ENCODE measurements at regions of chr6 and their contacts with region 1.

Region 1: DNA sequence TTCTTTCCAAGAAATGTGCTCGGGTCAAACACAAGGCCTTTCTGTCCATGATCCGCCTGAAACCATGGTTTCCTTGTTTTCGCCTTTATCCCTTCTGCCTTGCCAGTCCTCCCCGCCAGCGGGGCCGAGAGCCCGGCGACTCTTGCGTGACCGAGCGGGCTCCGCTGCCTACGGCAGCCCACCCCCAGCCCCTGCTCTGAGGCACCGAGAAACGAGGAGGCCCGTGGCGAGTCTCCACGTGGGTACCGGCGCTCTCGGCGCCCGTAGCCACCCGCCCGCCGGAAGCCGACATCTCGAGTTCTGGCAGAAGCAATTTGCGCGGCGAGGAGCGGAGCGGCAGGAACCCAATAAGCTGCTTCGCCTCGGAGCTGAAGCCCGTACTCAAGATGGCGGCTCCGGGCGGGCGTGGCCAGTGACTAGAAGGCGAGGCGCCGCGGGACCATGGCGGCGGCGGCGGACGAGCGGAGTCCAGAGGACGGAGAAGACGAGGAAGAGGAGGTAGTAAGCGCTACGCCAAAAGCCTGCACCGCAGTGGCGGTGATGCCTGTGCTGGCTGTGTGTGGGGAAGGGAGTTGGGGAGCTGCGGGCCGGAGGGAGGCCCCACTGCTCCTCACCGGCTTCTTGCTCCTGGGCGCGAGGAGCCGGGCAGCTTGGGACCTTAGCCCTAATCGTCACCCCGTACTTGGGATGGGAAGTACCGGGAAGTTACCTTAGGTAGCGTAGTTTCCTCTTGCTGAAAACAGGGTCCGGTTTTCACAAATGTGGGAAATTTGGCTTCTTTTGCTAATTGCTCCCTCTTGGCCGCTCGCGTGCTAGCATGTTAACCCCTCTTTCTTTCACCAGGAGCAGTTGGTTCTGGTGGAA is at the start of gene GTF3C6:
- DNase-seq: peak; percentile 94
- H3K4me3 Mint-ChIP-seq: peak within 1 kb of the TSS; percentile 94
- H3K27ac Mint-ChIP-seq: peak within 1 kb of the TSS; percentile 96
- H3K4me1 Mint-ChIP-seq: peaks cover 14% of the 10 kb centered on the region
- H3K27me3 Mint-ChIP-seq: no peaks in the 10 kb centered on the region
- total RNA-seq, gene GTF3C6: 81.6 to 84.7 TPM

Region 2: GRCh38 chr6:110981202-110981600 is 22.6 kb after region 1 on chr6:
- CTCF ChIA-PET with region 1: no interaction called
- intact Hi-C with region 1: loop called (anchors 1 kb)
- DNase-seq: no peak
- H3K4me3 Mint-ChIP-seq: peak overlapping the region; percentile 96
- H3K27ac Mint-ChIP-seq: peak overlapping the region; percentile 96
- H3K4me1 Mint-ChIP-seq: peaks cover 38% of the 10 kb centered on the region
- H3K27me3 Mint-ChIP-seq: no peaks in the 10 kb centered on the region

Region 3: GRCh38 chr6:111406200-111406721 is 447.7 kb after region 1 on chr6:
- CTCF ChIA-PET with region 1: no interaction called
- intact Hi-C with region 1: no loop called
- DNase-seq: no peak
- H3K4me3 Mint-ChIP-seq: no peak overlapping the region
- H3K27ac Mint-ChIP-seq: no peak overlapping the region
- H3K4me1 Mint-ChIP-seq: peaks cover 10% of the 10 kb centered on the region
- H3K27me3 Mint-ChIP-seq: no peaks in the 10 kb centered on the region

Measured in activated naive CD4-positive, alpha-beta T cell treated with anti-CD3 and anti-CD28 coated beads for 36 hours (primary cell).